AG04449 (cell line): ENCODE measurements at regions of chr16 and their contacts with region 1.

Region 1: GRCh38 chr16:84175350-84176081 is 11.3 kb downstream of the TAF1C start:
- DNase-seq: no peak
- H3K4me3 ChIP-seq: no peak overlapping the region
- CTCF ChIP-seq: peak; percentile 89

Region 2: DNA sequence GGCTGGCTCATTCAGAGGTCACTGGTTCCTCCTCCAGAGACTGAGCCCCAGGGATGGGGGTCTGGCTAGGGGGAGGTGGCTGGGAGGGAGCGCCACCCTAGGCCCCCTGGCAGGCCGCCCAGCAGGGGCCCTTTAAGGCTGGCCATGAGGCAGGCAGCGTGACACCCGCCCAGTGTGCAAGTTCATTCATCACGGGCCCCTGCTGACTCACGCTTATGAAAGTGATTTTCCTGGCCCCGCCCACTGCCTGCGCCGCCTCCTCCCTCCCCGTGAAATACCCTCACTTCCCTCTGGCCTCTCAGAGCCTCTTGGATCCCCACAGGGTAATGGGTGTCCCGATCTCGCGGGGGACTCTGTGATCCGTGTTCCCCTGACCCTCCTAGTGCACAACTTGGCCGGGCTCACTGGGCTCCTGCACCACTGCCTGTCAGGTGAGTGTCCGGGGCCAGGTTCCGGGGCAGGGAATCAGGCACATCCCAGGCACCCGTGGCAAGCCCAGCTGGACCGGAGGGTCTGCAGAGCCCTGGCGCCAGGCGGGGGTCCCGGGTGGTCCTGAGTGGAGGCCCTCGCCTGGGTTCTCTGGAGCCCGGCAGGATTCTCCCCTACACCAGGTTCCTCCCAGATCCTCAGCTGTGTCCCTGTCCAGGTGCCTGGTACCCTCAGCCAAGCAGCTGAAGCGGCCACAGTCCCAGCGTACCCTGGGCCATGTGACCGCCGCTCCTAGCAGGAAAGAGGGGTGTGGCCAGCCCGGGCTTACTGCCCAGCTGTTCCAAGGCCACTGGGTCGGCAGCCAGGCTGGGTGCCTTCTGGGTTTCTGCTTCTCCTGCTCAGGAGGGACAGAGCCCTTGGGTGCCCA is 222.3 kb before region 1 on chr16 and contains the start of gene OSGIN1:
- CTCF ChIA-PET with region 1: interaction called, 18 read pairs
- POLR2A ChIA-PET with region 1: no interaction called
- DNase-seq: peak; percentile 34
- H3K4me3 ChIP-seq: peak within 1 kb of the TSS; percentile 69
- CTCF ChIP-seq: no peak

Region 3: DNA sequence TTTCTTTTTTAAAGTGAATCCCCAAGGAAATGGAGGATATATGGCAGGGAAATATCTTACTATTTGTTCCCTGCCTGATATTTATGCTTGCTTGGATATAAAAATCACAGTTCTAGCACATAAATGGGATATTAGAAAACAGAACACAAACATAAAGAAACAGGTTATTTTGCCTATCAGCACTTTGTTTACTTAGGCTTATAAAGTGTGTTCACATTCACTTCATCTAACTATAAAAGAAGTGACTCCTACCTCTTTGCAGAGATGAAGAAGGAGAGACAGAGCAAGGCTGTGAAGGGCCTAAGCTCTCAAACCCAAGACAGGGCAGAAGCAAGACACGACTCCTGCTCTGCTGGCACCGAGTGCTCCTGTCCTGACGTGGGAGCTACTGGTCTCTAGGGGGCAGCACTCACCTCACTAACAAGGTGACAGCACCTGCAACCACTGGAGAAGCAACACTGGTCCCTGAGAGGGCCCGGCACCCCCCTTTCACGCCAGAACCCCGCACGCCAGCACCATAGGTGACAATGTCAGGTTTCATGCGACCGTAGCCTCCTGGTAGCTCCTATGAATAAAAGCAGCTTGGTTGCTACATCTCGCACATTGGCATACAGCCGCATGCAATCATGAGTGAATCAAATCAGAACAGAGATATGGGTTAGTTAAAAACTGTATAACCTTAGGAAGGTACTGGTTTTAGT is 90.8 kb before region 1 on chr16:
- CTCF ChIA-PET with region 1: interaction called, 100 read pairs
- POLR2A ChIA-PET with region 1: no interaction called
- DNase-seq: no peak
- H3K4me3 ChIP-seq: no peak overlapping the region
- CTCF ChIP-seq: peak; percentile 88

Region 4: DNA sequence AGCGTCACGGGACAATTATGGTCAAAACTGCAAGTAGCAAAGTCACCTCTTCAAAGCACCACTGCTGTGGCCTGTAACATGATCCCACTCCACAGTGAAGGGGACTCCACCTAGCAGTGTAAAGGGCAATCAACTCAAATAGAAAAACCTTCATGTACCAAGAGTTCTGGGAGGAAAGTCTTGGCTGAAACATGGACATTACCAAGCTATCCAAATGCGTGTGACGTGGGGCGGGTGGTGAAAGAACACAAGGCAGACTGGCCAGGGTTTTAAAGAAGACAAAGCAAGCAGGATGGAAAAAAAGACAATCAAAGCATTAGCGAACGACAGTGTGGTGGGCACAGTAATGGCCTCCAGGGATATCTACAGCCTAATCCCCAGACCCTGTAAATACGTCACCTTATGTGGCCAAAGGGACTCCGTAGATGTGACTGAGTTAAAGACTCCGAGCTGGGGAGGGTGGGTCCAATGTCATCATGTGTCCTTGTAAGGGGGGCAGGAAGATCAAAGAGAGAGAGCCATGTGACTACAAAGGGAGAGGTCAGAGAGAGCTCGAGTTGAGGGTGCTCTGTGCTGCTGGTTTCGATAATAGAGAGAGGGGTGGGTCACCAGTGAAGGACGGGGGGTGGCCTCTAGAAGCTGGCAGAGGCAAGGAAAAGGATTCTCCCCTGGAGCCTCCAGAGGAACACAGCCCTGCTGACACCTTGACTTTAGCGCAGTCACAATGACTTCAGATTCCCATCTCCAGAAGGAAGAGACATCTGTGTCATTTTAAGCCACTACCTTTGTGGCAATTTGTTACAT is 36.5 kb before region 1 on chr16:
- CTCF ChIA-PET with region 1: interaction called, 13 read pairs
- POLR2A ChIA-PET with region 1: no interaction called
- DNase-seq: no peak
- H3K4me3 ChIP-seq: no peak overlapping the region
- CTCF ChIP-seq: no peak

Region 5: GRCh38 chr16:84186685-84187437 is 11.3 kb after region 1 on chr16 and contains the start of gene TAF1C:
- CTCF ChIA-PET with region 1: interaction called, 116 read pairs
- POLR2A ChIA-PET with region 1: interaction called, 10 read pairs
- DNase-seq: peak; percentile 68
- H3K4me3 ChIP-seq: peak within 1 kb of the TSS; percentile 89
- CTCF ChIP-seq: peak; percentile 99